ENCODE measurements at regions of chr12 and their contacts with region 1.

Region 1: DNA sequence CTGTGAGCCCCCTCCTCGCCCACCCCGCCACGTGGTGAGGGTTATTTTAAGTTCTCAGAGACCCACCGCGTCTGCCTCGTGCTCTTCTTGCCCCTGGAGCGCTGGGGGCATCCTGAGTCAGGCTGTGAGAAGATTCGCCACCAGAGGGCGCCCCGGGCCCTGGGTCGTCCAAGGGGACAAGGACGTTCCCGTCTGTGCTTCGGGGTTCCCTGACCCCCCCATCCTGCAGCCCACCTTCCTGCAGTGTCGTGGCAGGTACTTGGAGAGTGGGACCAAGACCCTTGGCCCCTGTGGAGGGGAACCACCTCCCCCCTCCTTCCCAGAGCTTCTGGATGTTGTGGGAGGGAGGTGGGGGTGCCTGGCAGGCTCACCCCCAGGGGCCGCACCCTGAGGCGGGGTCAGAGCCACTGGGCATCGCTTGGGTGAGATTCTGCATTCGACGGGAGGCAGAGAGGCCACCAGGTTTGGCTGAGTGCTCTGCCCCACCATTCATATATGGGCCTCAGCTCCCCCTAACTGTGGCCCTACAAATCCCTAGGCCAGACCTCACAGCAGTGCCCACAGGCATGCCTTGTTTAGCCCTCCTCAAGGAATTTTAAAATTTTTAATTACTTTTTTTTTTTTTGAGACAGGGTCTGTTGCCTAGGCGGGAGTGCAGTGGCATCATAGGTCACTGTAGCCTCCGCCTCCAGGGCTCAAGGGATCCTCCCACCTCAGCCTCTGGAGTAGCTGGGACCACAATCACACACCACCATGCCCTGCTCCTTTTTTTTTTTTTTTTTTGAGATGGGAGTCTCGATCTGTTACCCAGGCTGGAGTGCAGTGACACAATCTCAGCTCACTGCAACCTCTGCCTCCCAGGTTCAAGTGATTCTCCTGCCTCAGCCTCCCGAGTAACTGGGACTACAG is 17.0 kb downstream of the RHOF start:
- DNase-seq: peak; percentile 90
- H3K4me3 Mint-ChIP-seq: no peak overlapping the region
- H3K27ac Mint-ChIP-seq: peak overlapping the region; percentile 73
- H3K4me1 Mint-ChIP-seq: peaks cover 26% of the 10 kb centered on the region
- H3K27me3 Mint-ChIP-seq: no peaks in the 10 kb centered on the region

Region 2: GRCh38 chr12:121712461-121713256 is 63.8 kb before region 1 on chr12 and contains the start of gene TMEM120B:
- CTCF ChIA-PET with region 1: interaction called, 10 read pairs
- POLR2A ChIA-PET with region 1: interaction called, 6 read pairs
- DNase-seq: peak; percentile 82
- H3K4me3 Mint-ChIP-seq: peak within 1 kb of the TSS; percentile 86
- H3K27ac Mint-ChIP-seq: peak within 1 kb of the TSS; percentile 93
- H3K4me1 Mint-ChIP-seq: peaks cover 23% of the 10 kb centered on the region
- H3K27me3 Mint-ChIP-seq: peaks cover 1% of the 10 kb centered on the region
- total RNA-seq, gene TMEM120B: 5.8 to 6.0 TPM

Region 3: GRCh38 chr12:121724930-121725329 is 51.5 kb before region 1 on chr12:
- CTCF ChIA-PET with region 1: no interaction called
- POLR2A ChIA-PET with region 1: no interaction called
- DNase-seq: no peak
- H3K4me3 Mint-ChIP-seq: no peak overlapping the region
- H3K27ac Mint-ChIP-seq: no peak overlapping the region
- H3K4me1 Mint-ChIP-seq: no peaks in the 10 kb centered on the region
- H3K27me3 Mint-ChIP-seq: no peaks in the 10 kb centered on the region

Region 4: GRCh38 chr12:122003651-122004611 is 227.5 kb after region 1 on chr12:
- CTCF ChIA-PET with region 1: no interaction called
- POLR2A ChIA-PET with region 1: no interaction called
- DNase-seq: no peak
- H3K4me3 Mint-ChIP-seq: no peak overlapping the region
- H3K27ac Mint-ChIP-seq: peak overlapping the region; percentile 38
- H3K4me1 Mint-ChIP-seq: peaks cover 37% of the 10 kb centered on the region
- H3K27me3 Mint-ChIP-seq: peaks cover 15% of the 10 kb centered on the region